ENCODE measurements at regions of chr18 and their contacts with region 1.

Region 1: GRCh38 chr18:47150029-47150823 is at the start of gene HDHD2:
- DNase-seq: peak; percentile 35 to 87 (median 76)
- ATAC-seq: peak; percentile 77
- H3K4me3 ChIP-seq: peak within 1 kb of the TSS; percentile 76 to 82
- H3K4me3 Mint-ChIP-seq: peak within 1 kb of the TSS; percentile 89
- H3K27ac ChIP-seq: peak within 1 kb of the TSS; percentile 66 to 78
- H3K27ac Mint-ChIP-seq: peak within 1 kb of the TSS; percentile 94
- H3K4me1 ChIP-seq: peaks cover 22% of the 10 kb centered on the region
- H3K4me1 Mint-ChIP-seq: peaks cover 53% of the 10 kb centered on the region
- H3K27me3 ChIP-seq: no peaks in the 10 kb centered on the region
- H3K27me3 Mint-ChIP-seq: no peaks in the 10 kb centered on the region
- CTCF ChIP-seq: no peak
- total RNA-seq, gene HDHD2: 6.6 to 6.8 TPM

Region 2: DNA sequence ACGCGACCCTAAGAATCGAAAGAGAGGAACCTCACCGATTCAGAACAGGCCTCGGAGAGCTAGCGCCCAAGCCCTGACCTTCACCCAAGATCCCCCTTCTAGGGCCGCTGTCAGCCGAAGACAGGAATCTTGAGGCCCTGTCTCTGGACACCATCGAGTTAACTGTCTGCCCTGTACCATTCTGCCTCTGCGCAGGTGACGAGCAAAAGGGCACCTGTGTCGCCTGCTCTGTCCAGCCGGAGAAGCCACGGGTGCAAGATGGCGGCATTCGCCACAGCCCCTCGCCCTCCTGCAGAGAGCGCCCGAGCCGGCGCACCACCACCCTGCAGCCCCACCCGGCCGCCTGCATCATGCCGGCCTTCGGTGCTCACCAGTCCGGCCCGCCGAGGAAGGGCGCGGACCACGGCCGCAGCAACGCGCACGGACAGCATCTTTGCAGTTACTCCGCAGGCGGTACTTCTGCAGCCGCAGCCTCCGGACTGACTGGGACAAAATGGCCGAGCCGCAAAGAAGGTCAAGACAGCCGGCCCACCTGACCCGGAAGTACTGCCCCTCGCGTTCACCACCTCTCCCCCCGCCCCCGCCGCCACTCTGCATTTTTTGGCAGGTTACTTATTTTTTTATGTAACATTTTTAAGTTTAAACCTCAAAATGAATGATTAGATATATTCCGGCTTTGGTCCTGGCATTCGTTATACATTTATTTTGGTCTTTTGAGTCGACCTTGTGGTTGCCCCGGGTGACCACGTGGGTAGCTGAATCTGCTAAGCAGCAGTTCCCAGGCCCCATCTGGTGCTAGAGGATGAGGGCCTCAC is 1052.2 kb before region 1 on chr18 and contains the start of gene ATP5F1A:
- CTCF ChIA-PET with region 1: no interaction called
- POLR2A ChIA-PET with region 1: no interaction called
- intact Hi-C with region 1: loop called in 1 of 2 experiments (anchors 10 kb)
- DNase-seq: peak; percentile 67 to 93 (median 85)
- ATAC-seq: peak; percentile 83
- H3K4me3 ChIP-seq: peak within 1 kb of the TSS; percentile 60 to 95
- H3K4me3 Mint-ChIP-seq: peak within 1 kb of the TSS; percentile 98
- H3K27ac ChIP-seq: peak within 1 kb of the TSS; percentile 74 to 82
- H3K27ac Mint-ChIP-seq: peak within 1 kb of the TSS; percentile 98
- H3K4me1 ChIP-seq: peaks cover 33% of the 10 kb centered on the region
- H3K4me1 Mint-ChIP-seq: peaks cover 33% of the 10 kb centered on the region
- H3K27me3 ChIP-seq: no peaks in the 10 kb centered on the region
- H3K27me3 Mint-ChIP-seq: no peaks in the 10 kb centered on the region
- CTCF ChIP-seq: no peak
- total RNA-seq, gene ATP5F1A: 208 to 212 TPM

Region 3: GRCh38 chr18:46917108-46917802 is 233.0 kb before region 1 on chr18 and contains the starts of genes KATNAL2 and PIAS2:
- CTCF ChIA-PET with region 1: no interaction called
- POLR2A ChIA-PET with region 1: interaction called, 7 read pairs
- intact Hi-C with region 1: loop called in 1 of 2 experiments (anchors 10 kb)
- DNase-seq: peak; percentile 38 to 88 (median 69)
- ATAC-seq: peak; percentile 82
- H3K4me3 ChIP-seq: peak within 1 kb of the TSS; percentile 56 to 79
- H3K4me3 Mint-ChIP-seq: peak within 1 kb of the TSS; percentile 90
- H3K27ac ChIP-seq: peak within 1 kb of the TSS; percentile 55 to 75
- H3K27ac Mint-ChIP-seq: peak within 1 kb of the TSS; percentile 91
- H3K4me1 ChIP-seq: peaks cover 12% of the 10 kb centered on the region
- H3K4me1 Mint-ChIP-seq: peaks cover 55% of the 10 kb centered on the region
- H3K27me3 ChIP-seq: no peaks in the 10 kb centered on the region
- H3K27me3 Mint-ChIP-seq: no peaks in the 10 kb centered on the region
- CTCF ChIP-seq: no peak
- total RNA-seq, gene KATNAL2: 1.0 to 2.1 TPM
- total RNA-seq, gene PIAS2: 38.4 to 40.2 TPM

Region 4: GRCh38 chr18:47175908-47176575 is 25.8 kb after region 1 on chr18 and contains the start of gene IER3IP1:
- CTCF ChIA-PET with region 1: no interaction called
- POLR2A ChIA-PET with region 1: interaction called, 5 read pairs
- intact Hi-C with region 1: loop called (anchors 1 kb)
- DNase-seq: peak; percentile 68 to 91 (median 88)
- ATAC-seq: peak; percentile 93
- H3K4me3 ChIP-seq: peak within 1 kb of the TSS; percentile 90 to 93
- H3K4me3 Mint-ChIP-seq: peak within 1 kb of the TSS; percentile 54
- H3K27ac ChIP-seq: peak within 1 kb of the TSS; percentile 34 to 46
- H3K27ac Mint-ChIP-seq: peak within 1 kb of the TSS; percentile 87
- H3K4me1 ChIP-seq: peaks cover 19% of the 10 kb centered on the region
- H3K4me1 Mint-ChIP-seq: peaks cover 8% of the 10 kb centered on the region
- H3K27me3 ChIP-seq: no peaks in the 10 kb centered on the region
- H3K27me3 Mint-ChIP-seq: no peaks in the 10 kb centered on the region
- CTCF ChIP-seq: no peak
- total RNA-seq, gene IER3IP1: 2.5 to 2.8 TPM